ENCODE measurements at regions of chr5 and their contacts with region 1.

Region 1: GRCh38 chr5:136202469-136203205 is 9.7 kb upstream of the SMIM32 start:
- DNase-seq: no peak
- ATAC-seq: no peak
- H3K4me3 ChIP-seq: no peak overlapping the region
- H3K27ac ChIP-seq: no peak overlapping the region
- H3K4me1 ChIP-seq: no peaks in the 10 kb centered on the region
- H3K27me3 ChIP-seq: no peaks in the 10 kb centered on the region
- CTCF ChIP-seq: no peak

Region 2: GRCh38 chr5:135887351-135887864 is 315.2 kb before region 1 on chr5:
- intact Hi-C with region 1: loop called (anchors 5 to 10 kb)
- DNase-seq: peak; percentile 41 to 77 (median 66)
- ATAC-seq: peak; percentile 92 to 99 (median 96)
- H3K4me3 ChIP-seq: no peak overlapping the region
- H3K27ac ChIP-seq: no peak overlapping the region
- H3K4me1 ChIP-seq: no peaks in the 10 kb centered on the region
- H3K27me3 ChIP-seq: no peaks in the 10 kb centered on the region
- CTCF ChIP-seq: peak; percentile 72 to 83 (median 72)

Region 3: GRCh38 chr5:136073714-136074529 is 128.7 kb before region 1 on chr5:
- intact Hi-C with region 1: no loop called
- DNase-seq: no peak
- ATAC-seq: no peak
- H3K4me3 ChIP-seq: no peak overlapping the region
- H3K27ac ChIP-seq: no peak overlapping the region
- H3K4me1 ChIP-seq: no peaks in the 10 kb centered on the region
- H3K27me3 ChIP-seq: no peaks in the 10 kb centered on the region
- CTCF ChIP-seq: no peak

Measured in pancreas (tissue), 10 donors.